ENCODE measurements at regions of chr5 and their contacts with region 1.

Region 1: DNA sequence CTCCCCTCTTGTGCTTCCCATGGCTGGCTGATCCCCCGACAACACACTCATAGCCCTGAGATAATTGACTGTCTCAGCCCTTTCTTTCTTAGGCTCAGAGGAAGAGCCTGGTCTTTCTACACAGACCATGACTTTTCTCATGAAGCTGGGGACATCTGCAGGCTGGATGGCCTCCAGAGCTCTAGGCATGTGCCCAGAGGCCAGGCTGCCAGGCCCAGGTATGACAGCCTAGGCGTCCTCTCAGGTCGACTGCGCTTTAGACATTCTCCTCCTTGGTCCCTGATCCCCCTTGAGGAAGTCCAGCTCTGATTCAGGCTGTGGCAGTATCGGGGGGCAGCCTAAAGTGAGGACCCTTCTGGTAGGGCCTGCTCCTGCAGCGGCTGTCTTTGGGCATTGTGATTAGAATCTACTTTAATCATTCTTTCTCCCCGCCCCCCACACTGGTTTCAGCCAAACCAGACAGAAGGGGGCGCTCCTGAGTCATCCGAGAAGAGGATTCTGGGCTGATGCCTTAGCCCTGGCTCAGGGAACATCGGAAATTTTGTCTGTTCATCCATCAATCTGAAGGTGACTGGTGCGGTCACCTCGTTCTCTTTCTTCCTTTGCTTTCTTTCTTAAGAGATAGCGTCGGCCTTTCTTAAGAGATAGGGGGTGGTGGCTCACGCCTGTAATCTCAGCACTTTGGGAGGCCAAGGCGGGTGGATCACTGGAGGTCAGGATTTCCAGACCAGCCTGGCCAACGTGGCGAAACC is 66.5 kb upstream of the HSPA9 start:
- DNase-seq: peak; percentile 60
- ATAC-seq: peak; percentile 88
- H3K4me3 ChIP-seq: no peak overlapping the region
- H3K27ac ChIP-seq: no peak overlapping the region
- H3K4me1 ChIP-seq: no peaks in the 10 kb centered on the region
- H3K27me3 ChIP-seq: peaks cover 45% of the 10 kb centered on the region
- CTCF ChIP-seq: peak; percentile 84
- POLR2A ChIP-seq: no peak
- RAD21 ChIP-seq: peak; percentile 90

Region 2: DNA sequence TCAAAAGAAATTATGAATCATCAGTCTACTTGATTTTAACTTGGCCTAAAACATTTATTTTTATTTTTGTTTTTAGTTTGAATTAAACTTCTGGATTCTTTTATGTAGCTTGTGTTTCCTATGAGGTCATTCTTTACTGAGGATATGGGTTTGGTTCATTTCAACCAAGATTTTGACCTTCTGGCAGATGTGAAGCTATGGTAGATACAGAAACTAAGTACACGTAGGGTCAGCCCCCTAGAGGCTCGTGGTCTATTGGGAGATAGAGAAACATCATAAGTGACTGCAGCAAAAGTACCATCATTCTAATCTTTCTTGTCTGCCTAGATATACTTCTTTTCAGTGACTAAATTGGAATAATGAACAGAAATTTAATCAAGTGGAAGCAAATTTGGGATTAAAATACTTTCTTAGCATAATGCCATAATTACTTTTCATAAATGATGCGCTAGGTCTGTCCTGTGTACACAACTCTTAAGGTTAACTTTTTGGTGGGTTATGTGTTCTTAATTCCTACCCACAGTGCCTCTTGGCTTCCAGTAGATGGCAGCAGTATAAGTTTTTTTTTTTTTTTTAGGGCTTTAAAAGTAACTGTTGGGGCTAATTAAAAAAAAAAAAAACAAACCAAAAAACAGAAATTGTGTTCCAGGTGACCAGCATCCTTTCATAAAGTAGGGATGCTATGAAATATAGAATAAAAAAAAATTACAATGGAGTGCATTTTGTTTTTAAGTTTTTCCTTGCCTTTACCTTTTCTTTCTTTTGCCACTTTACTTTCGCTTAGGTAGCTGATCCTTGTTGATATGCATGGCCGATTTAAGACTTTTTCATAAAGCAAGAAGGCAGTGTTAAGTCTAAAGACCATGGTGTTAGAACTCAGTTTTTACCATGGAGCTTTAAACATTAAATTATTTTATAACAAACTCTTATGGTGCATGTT is 183.5 kb after region 1 on chr5:
- CTCF ChIA-PET with region 1: no interaction called
- POLR2A ChIA-PET with region 1: no interaction called
- dilution Hi-C with region 1: no loop called
- in situ Hi-C with region 1: no loop called
- intact Hi-C with region 1: loop called (anchors 5 kb)
- DNase-seq: peak; percentile 39
- ATAC-seq: peak; percentile 46; the same call in 1 of the 2 replicates
- H3K4me3 ChIP-seq: no peak overlapping the region
- H3K27ac ChIP-seq: no peak overlapping the region
- H3K4me1 ChIP-seq: 0 out of 2 replicates have a peak, but pooled peaks cover 2% of the 10 kb centered on the region
- H3K27me3 ChIP-seq: no peaks in the 10 kb centered on the region
- CTCF ChIP-seq: peak; percentile 52
- POLR2A ChIP-seq: no peak
- RAD21 ChIP-seq: peak; percentile 38

Region 3: DNA sequence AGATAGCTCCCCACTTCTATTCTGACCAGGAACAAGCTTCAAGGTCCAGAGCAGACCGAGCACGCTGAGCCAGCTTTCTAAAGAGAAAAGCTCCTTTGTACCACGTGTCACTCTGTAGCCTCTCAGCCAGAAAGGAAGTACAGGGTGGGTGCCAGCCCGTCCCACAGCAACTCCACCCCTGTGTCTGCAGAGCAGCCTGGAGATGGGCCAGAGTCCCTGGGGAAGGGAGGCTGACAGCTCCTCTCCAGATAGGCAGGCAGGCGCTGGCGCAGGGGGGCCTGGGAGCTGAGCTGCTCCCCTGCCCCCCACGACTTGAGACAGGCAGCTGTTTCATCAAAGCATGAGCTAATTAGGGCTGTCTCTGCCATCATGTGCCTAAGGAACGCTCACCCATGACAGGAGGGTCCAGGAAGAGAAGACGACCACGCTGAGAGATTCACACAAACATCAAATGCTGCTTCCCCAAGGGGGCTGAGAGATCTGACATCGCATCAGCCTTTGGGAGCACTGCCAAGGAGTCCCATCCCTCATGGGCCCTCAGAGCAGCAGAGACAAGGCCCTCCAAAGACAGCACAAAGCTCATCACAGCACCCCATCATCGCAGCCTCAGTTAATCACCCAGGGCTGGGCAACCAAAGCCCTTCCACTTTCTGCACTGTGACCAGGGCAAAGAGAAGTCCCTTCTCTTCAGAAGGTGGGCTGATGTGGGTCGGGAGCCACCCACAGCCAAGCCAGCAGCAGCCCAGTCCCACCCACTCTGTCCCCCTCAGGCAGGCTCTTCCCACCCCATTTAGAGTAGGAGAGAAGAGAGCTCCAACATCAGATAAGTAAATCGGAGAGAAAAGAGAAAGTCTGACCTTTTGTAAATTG is 311.9 kb after region 1 on chr5:
- CTCF ChIA-PET with region 1: no interaction called
- POLR2A ChIA-PET with region 1: no interaction called
- dilution Hi-C with region 1: no loop called
- in situ Hi-C with region 1: no loop called
- intact Hi-C with region 1: no loop called
- DNase-seq: peak; percentile 54
- ATAC-seq: peak; percentile 75
- H3K4me3 ChIP-seq: no peak overlapping the region
- H3K27ac ChIP-seq: no peak overlapping the region
- H3K4me1 ChIP-seq: peaks cover 25% of the 10 kb centered on the region
- H3K27me3 ChIP-seq: no peaks in the 10 kb centered on the region
- CTCF ChIP-seq: no peak
- POLR2A ChIP-seq: no peak
- RAD21 ChIP-seq: no peak